AG04449 (cell line): ENCODE measurements at regions of chr3 and their contacts with region 1.

Region 1: DNA sequence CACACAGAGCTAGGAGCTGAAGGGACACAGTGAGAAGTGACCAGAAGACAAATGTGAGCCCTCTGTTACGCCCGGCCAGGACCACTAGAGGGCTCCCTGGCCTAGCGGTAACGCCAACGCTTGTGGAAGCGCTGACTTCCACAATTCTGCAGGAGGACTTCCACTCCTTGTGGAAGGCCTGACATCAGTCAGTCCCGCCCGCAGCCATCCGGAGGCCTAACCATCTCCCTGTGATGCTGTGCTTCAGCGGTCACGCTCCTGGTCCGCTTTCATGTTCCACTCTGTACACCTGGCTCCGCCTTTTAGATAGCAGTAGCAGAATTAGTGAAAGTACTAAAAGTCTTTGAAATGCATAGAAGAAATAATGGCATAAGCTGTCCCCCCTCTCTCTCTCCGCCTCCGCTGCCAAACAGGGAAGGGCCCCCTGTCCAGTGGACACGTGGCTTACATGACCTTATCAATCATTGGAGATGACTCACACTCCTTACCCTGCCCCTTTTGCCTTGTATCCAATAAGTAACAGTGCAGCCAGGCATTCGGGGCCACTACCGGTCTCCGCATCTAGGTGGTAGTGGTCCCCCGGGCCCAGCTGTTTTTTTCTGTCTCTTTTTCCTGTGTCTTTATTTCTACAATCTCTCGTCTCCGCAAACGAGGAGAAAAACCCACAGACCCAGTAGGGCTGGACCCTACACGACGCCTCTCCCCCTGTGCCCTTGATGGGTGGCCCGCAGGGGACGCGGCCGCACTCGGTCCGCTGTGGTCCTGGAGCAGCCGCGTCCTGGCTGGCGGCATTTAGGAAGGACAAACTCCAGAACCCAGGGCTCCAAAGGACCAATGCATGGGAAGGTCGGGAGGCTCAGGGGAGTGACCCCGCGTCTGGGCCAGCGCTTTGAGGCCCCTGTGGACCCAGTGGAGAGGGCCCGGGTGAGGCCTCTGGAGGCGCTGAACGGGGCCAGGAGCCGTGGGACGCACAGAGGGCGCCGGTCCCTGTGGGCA is 27.0 kb upstream of the RPL32 start:
- DNase-seq: no peak
- H3K4me3 ChIP-seq: no peak overlapping the region
- CTCF ChIP-seq: peak; percentile 94

Region 2: DNA sequence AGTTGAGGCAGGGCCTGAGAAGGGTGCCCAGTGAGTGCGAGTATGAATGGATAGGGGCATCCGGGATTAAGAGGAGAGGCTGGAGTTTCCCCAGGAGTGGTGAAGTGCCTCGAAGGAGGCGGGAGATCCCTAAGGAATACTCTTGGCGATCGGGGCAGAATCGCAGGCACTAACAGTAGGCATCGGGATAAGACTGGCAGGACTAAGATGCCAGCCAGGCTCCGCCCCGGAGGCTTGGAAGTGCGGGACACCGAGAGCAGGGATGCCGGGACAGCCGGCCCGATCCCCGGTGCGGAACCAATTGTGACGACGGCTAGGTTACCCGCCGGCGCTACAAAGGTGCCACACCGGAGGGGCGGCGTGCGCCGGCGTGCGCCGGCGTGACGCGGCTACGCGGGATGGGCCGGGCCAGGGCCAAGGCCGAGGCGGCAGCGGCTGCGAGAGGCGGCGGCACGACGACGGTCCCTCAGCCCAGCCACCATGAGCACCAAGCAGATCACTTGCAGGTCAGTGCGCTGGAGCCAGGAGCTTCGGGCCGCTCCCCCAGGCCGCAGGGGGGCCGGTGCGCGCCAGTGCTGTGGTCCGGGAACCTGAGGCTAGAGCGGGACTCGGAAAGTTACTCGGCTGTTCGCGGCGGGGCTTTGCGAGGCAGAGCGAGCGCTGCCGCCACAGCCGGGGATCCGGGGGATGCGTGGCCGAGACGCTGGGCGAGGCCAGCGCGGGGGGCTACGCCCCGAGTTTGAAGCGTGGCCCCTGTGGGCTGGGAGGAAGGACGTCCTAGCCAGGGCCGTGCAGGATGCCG is 311.5 kb before region 1 on chr3 and contains the start of gene MKRN2:
- CTCF ChIA-PET with region 1: no interaction called
- POLR2A ChIA-PET with region 1: no interaction called
- DNase-seq: peak; percentile 16
- H3K4me3 ChIP-seq: peak within 1 kb of the TSS; percentile 93
- CTCF ChIP-seq: no peak

Region 3: DNA sequence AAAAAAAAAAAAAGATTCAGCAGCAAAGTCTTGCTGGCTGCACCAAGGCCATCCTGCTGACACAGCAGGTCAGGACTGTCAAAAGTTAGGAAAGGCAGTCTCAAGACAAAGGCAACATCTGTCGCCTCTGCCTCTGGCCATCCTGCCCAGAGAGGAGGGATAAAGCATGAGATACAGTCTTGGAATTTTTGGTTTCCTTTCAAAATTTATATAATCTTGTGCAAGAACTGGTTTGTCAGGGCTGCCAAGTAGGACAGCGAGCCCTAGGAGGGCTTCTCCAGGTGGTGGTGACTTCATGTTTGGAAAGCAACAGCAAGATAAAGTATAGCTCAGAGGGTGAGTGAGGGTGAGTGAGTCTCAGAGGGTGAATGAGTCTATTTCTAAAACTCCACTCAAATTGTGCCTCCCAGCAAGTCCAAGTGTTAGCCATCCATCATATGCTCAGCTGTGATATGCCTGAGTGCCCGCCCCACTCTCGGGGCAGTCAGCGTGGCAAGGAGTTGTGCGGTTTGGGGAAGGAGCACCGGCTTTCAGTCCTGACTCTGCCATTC is 15.1 kb before region 1 on chr3:
- CTCF ChIA-PET with region 1: interaction called, 24 read pairs
- POLR2A ChIA-PET with region 1: no interaction called
- DNase-seq: peak; percentile 9
- H3K4me3 ChIP-seq: no peak overlapping the region
- CTCF ChIP-seq: no peak

Region 4: DNA sequence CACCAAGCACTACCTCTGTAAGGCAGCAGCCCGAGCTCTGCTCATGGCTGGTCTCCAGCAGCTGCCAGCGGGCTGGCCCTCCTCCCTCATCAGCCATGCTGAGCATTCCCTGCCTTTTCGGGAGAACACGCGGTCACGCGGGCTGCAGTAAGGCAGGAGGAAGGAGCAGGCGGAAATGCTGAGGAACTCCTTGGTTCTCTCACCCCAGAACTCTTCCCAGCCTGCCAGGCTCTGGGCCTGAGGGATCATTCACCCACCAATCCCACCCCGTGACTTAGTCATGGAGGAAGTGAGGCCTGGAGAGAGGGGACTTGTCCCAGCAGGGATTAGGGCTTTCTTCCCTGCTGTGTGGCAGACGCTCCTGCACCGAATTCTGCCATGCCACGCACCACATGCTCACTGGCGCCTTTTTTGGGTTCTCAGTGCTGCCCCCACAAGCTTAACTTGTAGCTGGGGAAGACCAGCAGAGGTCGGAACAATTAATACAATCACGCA is 15.9 kb after region 1 on chr3:
- CTCF ChIA-PET with region 1: interaction called, 81 read pairs
- POLR2A ChIA-PET with region 1: no interaction called
- DNase-seq: no peak
- H3K4me3 ChIP-seq: no peak overlapping the region
- CTCF ChIP-seq: no peak